ENCODE measurements at regions of chr19 and their contacts with region 1.

Region 1: GRCh38 chr19:52171321-52172169 is at the start of gene ZNF836:
- DNase-seq: peak; percentile 94
- ATAC-seq: peak; percentile 98
- total RNA-seq, gene ZNF836: 6.8 TPM

Region 2: DNA sequence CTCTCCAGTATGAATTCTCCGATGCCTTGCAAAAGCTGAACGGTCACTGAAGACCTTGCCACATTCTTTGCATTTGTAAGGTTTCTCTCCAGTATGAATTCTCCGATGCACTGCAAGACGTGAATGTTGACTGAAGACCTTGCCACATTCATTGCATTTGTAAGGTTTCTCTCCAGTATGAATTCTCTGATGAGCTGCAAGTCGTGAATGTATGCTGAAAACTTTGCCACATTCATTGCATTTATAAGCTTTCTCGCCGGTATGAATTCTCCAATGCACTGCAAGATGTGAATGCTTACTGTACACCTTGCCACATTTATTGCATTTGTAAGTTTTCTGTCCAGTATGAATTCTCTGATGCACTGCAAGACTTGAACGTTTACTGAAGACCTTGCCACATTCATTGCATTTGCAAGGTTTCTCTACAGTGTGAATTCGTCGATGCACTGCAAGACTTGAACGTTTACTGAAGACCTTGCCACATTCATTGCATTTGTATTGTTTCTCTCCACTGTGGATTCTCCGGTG is 56.0 kb before region 1 on chr19:
- intact Hi-C with region 1: no loop called
- DNase-seq: no peak
- ATAC-seq: no peak

Region 3: DNA sequence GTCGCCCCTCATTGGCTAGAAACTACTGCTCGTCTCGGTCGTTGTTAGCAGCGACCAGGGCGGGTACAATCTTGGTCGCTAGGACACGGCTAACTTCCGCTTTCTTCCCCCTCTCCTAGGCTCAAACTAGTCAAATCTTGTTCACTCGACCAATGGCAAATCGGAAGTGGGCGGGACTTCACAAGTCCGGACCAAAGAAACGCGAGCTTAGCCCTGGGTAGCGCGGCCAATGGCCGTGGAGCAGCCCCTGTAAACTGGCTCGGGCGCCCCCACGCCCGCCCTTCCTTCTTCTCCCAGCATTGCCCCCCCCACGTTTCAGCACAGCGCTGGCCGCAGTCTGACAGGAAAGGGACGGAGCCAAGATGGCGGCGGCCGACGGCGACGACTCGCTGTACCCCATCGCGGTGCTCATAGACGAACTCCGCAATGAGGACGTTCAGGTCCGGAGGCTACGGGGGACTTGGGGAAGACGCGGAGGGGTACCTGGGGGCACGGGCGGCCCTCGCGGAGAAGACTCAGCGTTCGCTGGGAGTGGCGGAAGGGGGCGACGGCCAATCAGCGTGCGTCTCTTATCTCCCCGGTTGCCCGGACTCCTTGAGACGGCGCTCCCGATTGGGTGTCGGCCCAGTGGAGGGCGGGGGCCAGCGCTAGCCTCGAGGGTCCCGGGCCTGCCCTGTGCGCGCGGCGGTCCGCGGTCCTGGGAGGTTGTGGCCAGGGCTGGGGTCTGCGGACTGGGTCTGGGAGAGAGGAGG is 18.4 kb after region 1 on chr19 and contains the start of gene PPP2R1A:
- intact Hi-C with region 1: loop called (anchors 1 kb)
- DNase-seq: peak; percentile 99
- ATAC-seq: peak; percentile 96
- total RNA-seq, gene PPP2R1A: 338 TPM

Region 4: GRCh38 chr19:52258426-52258825 is 86.9 kb after region 1 on chr19:
- intact Hi-C with region 1: no loop called
- DNase-seq: no peak
- ATAC-seq: no peak

Region 5: GRCh38 chr19:52451241-52451640 is 279.7 kb after region 1 on chr19:
- intact Hi-C with region 1: no loop called
- DNase-seq: no peak
- ATAC-seq: no peak

Measured in Right ventricle myocardium inferior (tissue), 1 donor.